ENCODE measurements at regions of chr18 and their contacts with region 1.

Region 1: DNA sequence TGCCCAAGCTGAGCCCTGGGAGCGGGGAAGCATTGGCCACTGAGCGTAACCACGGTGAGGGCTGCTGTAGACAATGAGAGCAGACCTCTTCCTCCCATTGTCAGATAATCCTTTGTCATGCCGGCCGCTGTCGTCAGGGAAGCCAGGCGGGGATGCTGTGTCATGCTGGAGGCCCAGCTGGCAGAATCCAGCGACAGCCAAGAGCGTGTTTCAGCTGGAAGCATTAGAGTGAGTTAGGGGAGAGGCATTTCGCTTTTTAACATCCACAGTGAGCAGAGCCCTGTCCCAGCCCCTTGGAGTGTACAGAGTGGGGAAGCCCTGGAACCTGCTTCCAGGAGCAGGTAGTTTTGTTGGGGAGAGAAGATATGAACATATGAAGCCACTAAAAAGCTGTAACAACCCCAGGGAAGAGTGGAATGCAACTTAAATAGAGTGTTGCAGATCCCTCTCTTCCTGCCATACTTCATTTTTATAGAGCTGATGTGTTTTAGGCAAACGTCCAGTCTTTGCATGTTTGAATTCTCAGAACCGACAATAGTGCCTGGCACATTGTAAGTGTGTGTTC is 7.0 kb downstream of the CTIF start:
- DNase-seq: peak; percentile 75 to 87 (median 81)
- ATAC-seq: peak; percentile 41 to 79 (median 52)
- H3K4me3 ChIP-seq: no peak overlapping the region
- H3K27ac ChIP-seq: peak overlapping the region in 11 of 12 donors; percentile 5 to 81 (median 63)
- H3K4me1 ChIP-seq: peaks cover 0 to 92% (median 75%) of the 10 kb centered on the region in 12 donors
- H3K27me3 ChIP-seq: no peaks in the 10 kb centered on the region
- CTCF ChIP-seq: no peak
- POLR2A ChIP-seq: peak in 1 of 2 donors; percentile 28

Region 2: GRCh38 chr18:47381975-47382570 is 1163.8 kb before region 1 on chr18:
- intact Hi-C with region 1: no loop called
- DNase-seq: no peak
- ATAC-seq: peak in 1 of 4 donors; percentile 15
- H3K4me3 ChIP-seq: no peak overlapping the region
- H3K27ac ChIP-seq: no peak overlapping the region
- H3K4me1 ChIP-seq: no peaks in the 10 kb centered on the region
- H3K27me3 ChIP-seq: peaks cover 0 to 15% (median 0%) of the 10 kb centered on the region in 9 donors
- CTCF ChIP-seq: no peak
- POLR2A ChIP-seq: no peak

Region 3: GRCh38 chr18:48167897-48168253 is 378.0 kb before region 1 on chr18:
- intact Hi-C with region 1: no loop called
- DNase-seq: no peak
- ATAC-seq: peak in 2 of 4 donors; percentile 30 to 48
- H3K4me3 ChIP-seq: no peak overlapping the region
- H3K27ac ChIP-seq: peak overlapping the region in 5 of 12 donors; percentile 21 to 72 (median 29)
- H3K4me1 ChIP-seq: peaks cover 2 to 41% (median 24%) of the 10 kb centered on the region in 12 donors
- H3K27me3 ChIP-seq: no peaks in the 10 kb centered on the region
- CTCF ChIP-seq: no peak
- POLR2A ChIP-seq: no peak

Region 4: GRCh38 chr18:48563043-48563442 is 17.2 kb after region 1 on chr18:
- intact Hi-C with region 1: loop called in 1 of 10 experiments (anchors 2 kb)
- DNase-seq: peak in 1 of 5 donors; percentile 46
- ATAC-seq: peak in 3 of 4 donors; percentile 56 to 75 (median 65)
- H3K4me3 ChIP-seq: no peak overlapping the region
- H3K27ac ChIP-seq: peak overlapping the region in 3 of 12 donors; percentile 15 to 28 (median 22)
- H3K4me1 ChIP-seq: peaks cover 5 to 50% (median 32%) of the 10 kb centered on the region in 12 donors
- H3K27me3 ChIP-seq: no peaks in the 10 kb centered on the region
- CTCF ChIP-seq: no peak
- POLR2A ChIP-seq: no peak

Region 5: DNA sequence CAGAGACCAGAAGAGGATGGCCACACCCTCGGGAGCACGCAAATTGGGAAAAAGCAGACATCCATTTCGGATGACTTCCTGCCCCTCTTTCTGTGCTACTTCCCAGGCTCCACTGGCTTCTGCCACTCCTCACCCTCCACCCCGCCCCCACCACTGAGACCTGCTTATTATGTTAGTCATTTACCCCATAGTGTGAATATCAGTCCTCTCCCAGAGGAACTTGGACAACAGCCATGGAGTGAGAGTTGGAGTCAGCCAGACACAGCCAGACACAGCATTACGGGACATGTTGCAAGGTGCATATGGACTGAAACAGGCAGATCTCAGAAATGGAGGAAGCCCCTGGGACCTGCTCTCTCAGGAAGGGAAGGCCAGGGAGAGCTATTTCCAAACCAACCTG is 44.8 kb after region 1 on chr18:
- intact Hi-C with region 1: loop called in 4 of 10 experiments (anchors 5 to 10 kb)
- DNase-seq: peak in 1 of 5 donors; percentile 77
- ATAC-seq: peak in 3 of 4 donors; percentile 5 to 59 (median 29)
- H3K4me3 ChIP-seq: no peak overlapping the region
- H3K27ac ChIP-seq: peak overlapping the region in 10 of 12 donors; percentile 54 to 87 (median 70)
- H3K4me1 ChIP-seq: peaks cover 0 to 54% (median 28%) of the 10 kb centered on the region in 12 donors
- H3K27me3 ChIP-seq: no peaks in the 10 kb centered on the region
- CTCF ChIP-seq: no peak
- POLR2A ChIP-seq: no peak

Measured in heart left ventricle (tissue), 16 donors.